PC-3 (cell line): ENCODE measurements at regions of chr12 and their contacts with region 1.

Region 1: GRCh38 chr12:117850048-117850447 is 118.7 kb downstream of the KSR2 start:
- DNase-seq: peak; percentile 80
- ATAC-seq: peak; percentile 35
- H3K4me3 ChIP-seq: no peak overlapping the region
- H3K27ac ChIP-seq: no peak overlapping the region
- H3K4me1 ChIP-seq: peaks cover 21% of the 10 kb centered on the region
- H3K27me3 ChIP-seq: no peaks in the 10 kb centered on the region
- CTCF ChIP-seq: peak; percentile 97

Region 2: DNA sequence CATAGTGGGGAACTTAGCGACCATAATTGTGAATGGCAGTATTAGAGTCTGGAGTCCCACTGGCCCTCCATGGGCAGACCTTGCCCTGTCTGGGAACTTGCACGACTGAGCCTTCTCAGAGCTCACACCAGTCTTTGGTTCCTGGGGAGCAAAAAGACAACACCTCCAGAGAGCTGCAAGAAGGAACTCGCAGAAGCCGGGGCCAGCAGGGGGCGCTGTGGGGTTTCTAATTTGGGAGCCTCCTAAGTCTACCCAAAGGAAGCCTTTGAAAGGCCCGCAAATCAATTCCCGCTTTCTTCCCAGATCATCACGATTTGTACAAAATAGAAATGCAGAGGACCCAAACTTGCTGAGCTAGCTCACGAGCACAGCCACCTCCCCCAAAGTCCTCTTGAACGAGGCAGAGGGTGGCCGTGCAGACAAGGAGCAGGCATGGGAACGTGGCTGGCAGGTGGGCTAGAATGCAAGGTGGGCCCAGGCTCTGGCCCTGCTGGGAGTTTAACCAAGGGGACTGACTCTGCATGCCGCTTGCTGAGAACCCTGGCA is 613.5 kb before region 1 on chr12:
- CTCF ChIA-PET with region 1: interaction called, 4 read pairs
- POLR2A ChIA-PET with region 1: no interaction called
- intact Hi-C with region 1: loop called (anchors 2 kb)
- DNase-seq: peak; percentile 89
- ATAC-seq: peak; percentile 97
- H3K4me3 ChIP-seq: no peak overlapping the region
- H3K27ac ChIP-seq: no peak overlapping the region
- H3K4me1 ChIP-seq: no peaks in the 10 kb centered on the region
- H3K27me3 ChIP-seq: peaks cover 15% of the 10 kb centered on the region; the same call in 1 of the 2 replicates
- CTCF ChIP-seq: peak; percentile 97

Region 3: DNA sequence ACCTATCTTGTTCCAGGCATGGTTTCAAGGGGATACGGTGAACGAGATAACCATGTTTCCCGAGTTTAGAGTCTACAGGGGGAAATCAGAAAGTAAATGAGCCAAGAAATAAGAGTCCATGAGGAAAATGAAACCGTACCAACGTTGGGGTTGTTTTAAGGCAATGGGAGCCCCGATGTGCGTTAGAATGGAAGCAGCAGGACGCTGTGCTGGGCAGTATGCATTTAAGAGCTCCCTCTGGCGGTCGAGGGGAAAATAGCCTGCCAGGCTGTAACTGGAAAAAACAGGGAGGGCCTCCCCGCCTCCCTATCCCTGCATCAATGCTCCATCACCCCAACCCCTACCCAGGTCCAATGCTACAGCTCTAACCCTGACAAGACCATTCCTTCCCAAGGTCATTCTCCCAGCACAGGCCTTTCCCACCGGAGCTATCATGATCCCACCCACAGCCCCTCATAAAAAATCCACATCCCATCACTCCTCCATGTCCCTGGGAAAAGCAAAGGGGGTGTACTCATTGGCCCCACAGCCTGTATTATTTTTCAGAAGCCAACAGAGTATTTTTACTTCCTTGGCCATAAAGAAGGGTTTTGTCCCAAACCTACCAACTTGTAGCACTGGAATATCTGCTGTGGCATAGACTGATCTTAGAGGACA is 262.3 kb before region 1 on chr12:
- CTCF ChIA-PET with region 1: no interaction called
- POLR2A ChIA-PET with region 1: no interaction called
- intact Hi-C with region 1: loop called (anchors 5 kb)
- DNase-seq: peak; percentile 76
- ATAC-seq: peak; percentile 90
- H3K4me3 ChIP-seq: no peak overlapping the region
- H3K27ac ChIP-seq: no peak overlapping the region
- H3K4me1 ChIP-seq: no peaks in the 10 kb centered on the region
- H3K27me3 ChIP-seq: no peaks in the 10 kb centered on the region
- CTCF ChIP-seq: peak; percentile 92

Region 4: GRCh38 chr12:117986705-117987469 is 136.8 kb after region 1 on chr12:
- CTCF ChIA-PET with region 1: interaction called, 17 read pairs
- POLR2A ChIA-PET with region 1: no interaction called
- intact Hi-C with region 1: no loop called
- DNase-seq: peak; percentile 94
- ATAC-seq: peak; percentile 81
- H3K4me3 ChIP-seq: peak overlapping the region; percentile 14; the same call in 1 of the 2 replicates
- H3K27ac ChIP-seq: peak overlapping the region; percentile 91
- H3K4me1 ChIP-seq: peaks cover 36% of the 10 kb centered on the region
- H3K27me3 ChIP-seq: no peaks in the 10 kb centered on the region
- CTCF ChIP-seq: no peak